ENCODE measurements at regions of chr3 and their contacts with region 1.

Region 1: GRCh38 chr3:33629219-33629618 is 88.8 kb downstream of the CLASP2 start:
- DNase-seq: no peak
- H3K4me3 ChIP-seq: no peak overlapping the region
- CTCF ChIP-seq: no peak

Region 2: DNA sequence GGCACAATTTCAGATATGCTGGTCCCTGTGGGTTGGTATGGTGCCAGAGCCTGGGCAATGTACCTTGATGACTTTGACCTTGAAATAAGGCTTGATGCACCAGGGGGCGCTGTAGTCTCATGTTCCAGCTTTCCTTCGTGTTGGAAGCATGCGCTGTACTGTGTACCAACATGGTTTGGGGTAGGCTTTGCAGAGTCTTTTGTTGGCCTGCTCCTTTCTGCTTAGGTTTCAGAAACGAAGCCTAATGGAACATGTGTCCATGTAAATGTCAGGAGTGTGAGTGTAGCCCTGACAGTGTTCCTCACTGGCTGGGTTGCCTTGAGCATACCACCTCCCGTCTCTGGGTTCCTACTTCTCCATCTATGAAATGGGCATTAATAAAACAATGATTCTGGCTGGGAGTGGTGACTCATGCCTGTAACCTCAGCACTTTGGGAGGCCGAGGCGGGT is 681.4 kb before region 1 on chr3:
- in situ Hi-C with region 1: no loop called
- DNase-seq: peak; percentile 58
- H3K4me3 ChIP-seq: no peak overlapping the region
- CTCF ChIP-seq: peak; percentile 75

Region 3: GRCh38 chr3:33775363-33775762 is 146.1 kb after region 1 on chr3:
- in situ Hi-C with region 1: loop called (anchors 5 kb)
- DNase-seq: no peak
- H3K4me3 ChIP-seq: no peak overlapping the region
- CTCF ChIP-seq: no peak